B cell (primary cell): ENCODE measurements at regions of chr2 and their contacts with region 1.

Region 1: GRCh38 chr2:36966370-36967235 is at the start of gene STRN:
- DNase-seq: peak; percentile 99
- ATAC-seq: peak; percentile 91
- H3K4me3 ChIP-seq: peak within 1 kb of the TSS; percentile 66 to 91 (median 79)
- H3K4me3 Mint-ChIP-seq: peak within 1 kb of the TSS; percentile 99
- H3K27ac ChIP-seq: peak within 1 kb of the TSS; percentile 72 to 89
- H3K27ac Mint-ChIP-seq: peak within 1 kb of the TSS; percentile 94
- H3K4me1 ChIP-seq: peaks cover 21 to 23% of the 10 kb centered on the region in 2 donors
- H3K4me1 Mint-ChIP-seq: peaks cover 33% of the 10 kb centered on the region
- H3K27me3 ChIP-seq: no peaks in the 10 kb centered on the region
- H3K27me3 Mint-ChIP-seq: no peaks in the 10 kb centered on the region
- CTCF ChIP-seq: no peak
- total RNA-seq, gene STRN: 38.6 and 42.8 TPM in 2 replicates

Region 2: GRCh38 chr2:36981911-36982310 is 15.3 kb after region 1 on chr2:
- CTCF ChIA-PET with region 1: no interaction called
- POLR2A ChIA-PET with region 1: no interaction called
- intact Hi-C with region 1: no loop called
- DNase-seq: no peak
- ATAC-seq: no peak
- H3K4me3 ChIP-seq: no peak overlapping the region
- H3K4me3 Mint-ChIP-seq: no peak overlapping the region
- H3K27ac ChIP-seq: no peak overlapping the region
- H3K27ac Mint-ChIP-seq: no peak overlapping the region
- H3K4me1 ChIP-seq: no peaks in the 10 kb centered on the region
- H3K4me1 Mint-ChIP-seq: no peaks in the 10 kb centered on the region
- H3K27me3 ChIP-seq: no peaks in the 10 kb centered on the region
- H3K27me3 Mint-ChIP-seq: no peaks in the 10 kb centered on the region
- CTCF ChIP-seq: no peak

Region 3: DNA sequence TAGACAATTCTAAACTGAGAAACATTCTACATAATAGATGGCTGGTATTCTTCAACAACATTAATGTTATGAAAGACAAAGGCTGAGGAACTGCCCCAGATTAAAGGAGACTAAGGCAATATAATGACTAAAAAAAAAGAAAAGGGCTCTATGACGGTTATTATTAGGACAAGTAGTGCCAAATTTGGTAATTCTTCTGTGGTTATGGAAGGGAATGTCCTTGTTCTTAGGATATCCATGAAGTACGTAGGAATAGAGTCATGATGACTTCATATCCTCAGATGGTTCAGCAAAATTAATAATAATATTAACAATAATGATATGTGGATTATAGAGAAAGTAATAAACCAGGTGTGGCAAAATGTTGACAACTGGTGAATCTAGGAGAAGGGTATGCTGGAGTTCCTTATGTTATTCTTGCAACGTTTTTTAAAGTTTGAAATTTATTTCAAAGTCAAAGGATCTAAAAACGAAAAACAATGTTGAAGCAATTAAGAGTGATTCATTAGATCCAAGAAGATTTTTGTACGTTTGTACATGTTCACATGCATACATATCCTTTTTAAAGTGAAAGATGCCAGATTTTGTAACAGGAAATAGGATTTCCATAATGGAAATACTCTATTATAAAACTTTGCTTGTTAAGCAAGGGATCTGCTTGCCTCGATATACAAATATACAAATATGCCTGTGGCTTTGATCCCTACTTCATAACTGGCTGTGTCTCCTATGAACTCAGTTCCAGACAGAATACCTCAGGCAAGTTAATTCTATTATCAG is 27.4 kb after region 1 on chr2:
- CTCF ChIA-PET with region 1: no interaction called
- POLR2A ChIA-PET with region 1: interaction called, 11 read pairs
- intact Hi-C with region 1: no loop called
- DNase-seq: no peak
- ATAC-seq: no peak
- H3K4me3 ChIP-seq: no peak overlapping the region
- H3K4me3 Mint-ChIP-seq: no peak overlapping the region
- H3K27ac ChIP-seq: no peak overlapping the region
- H3K27ac Mint-ChIP-seq: no peak overlapping the region
- H3K4me1 ChIP-seq: no peaks in the 10 kb centered on the region
- H3K4me1 Mint-ChIP-seq: no peaks in the 10 kb centered on the region
- H3K27me3 ChIP-seq: no peaks in the 10 kb centered on the region
- H3K27me3 Mint-ChIP-seq: no peaks in the 10 kb centered on the region
- CTCF ChIP-seq: no peak

Region 4: DNA sequence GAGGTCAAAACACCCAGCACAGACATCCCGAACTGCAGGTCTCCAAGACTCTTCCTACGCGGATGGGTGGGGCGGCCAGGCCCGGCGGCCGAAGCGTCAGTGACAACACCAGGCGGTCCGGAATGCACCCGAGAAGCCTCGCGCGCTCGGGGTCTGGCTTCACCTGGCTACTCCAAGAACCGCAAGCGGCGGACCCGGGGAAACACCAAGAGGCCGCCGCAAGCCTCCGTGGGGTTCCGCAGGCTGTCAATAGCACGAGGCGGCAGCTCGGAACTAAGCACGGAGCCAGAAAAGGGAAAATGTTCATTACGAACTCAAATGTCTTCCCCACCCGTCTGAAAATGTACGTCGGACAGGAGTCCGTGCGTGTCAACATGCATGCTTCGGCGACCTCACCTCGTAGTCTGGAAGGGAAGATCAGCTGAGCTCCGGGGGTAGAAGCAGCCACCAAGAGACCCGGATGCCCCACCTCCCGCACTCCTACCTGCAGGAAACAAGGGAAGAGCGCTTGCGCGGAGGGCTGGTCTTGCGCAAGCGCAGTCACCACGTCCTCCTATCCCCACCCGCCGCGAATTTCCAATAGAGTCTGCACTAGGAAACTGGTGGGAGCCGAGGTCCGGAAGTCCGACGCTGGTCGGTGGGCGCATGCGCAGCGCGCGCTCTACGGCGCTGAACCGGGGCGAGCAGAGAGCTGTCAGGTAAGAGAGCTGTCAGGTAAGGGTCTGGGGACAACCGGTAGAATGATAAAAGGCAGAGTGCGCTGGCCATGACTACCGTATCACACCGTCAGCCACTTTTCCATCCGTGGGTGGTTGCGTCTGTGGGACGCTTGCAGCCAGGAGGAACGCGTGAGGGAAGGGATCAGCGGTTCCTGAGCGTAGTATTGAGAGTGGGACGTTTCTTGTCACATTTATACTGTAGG is 117.5 kb after region 1 on chr2 and contains the starts of genes GPATCH11 and HEATR5B:
- CTCF ChIA-PET with region 1: no interaction called
- POLR2A ChIA-PET with region 1: no interaction called
- intact Hi-C with region 1: loop called (anchors 1 kb)
- DNase-seq: peak; percentile 94
- ATAC-seq: peak; percentile 81
- H3K4me3 ChIP-seq: peak within 1 kb of the TSS; percentile 75 to 93 (median 89)
- H3K4me3 Mint-ChIP-seq: peak within 1 kb of the TSS; percentile 76
- H3K27ac ChIP-seq: peak within 1 kb of the TSS; percentile 69 to 91
- H3K27ac Mint-ChIP-seq: peak within 1 kb of the TSS; percentile 84
- H3K4me1 ChIP-seq: peaks cover 67 to 73% of the 10 kb centered on the region in 2 donors
- H3K4me1 Mint-ChIP-seq: peaks cover 61% of the 10 kb centered on the region
- H3K27me3 ChIP-seq: no peaks in the 10 kb centered on the region
- H3K27me3 Mint-ChIP-seq: no peaks in the 10 kb centered on the region
- CTCF ChIP-seq: no peak
- total RNA-seq, gene GPATCH11: 18.2 and 20.2 TPM in 2 replicates
- total RNA-seq, gene HEATR5B: 44.3 and 50.0 TPM in 2 replicates

Region 5: GRCh38 chr2:37196320-37197195 is 230.0 kb after region 1 on chr2 and contains the start of gene CEBPZOS:
- CTCF ChIA-PET with region 1: no interaction called
- POLR2A ChIA-PET with region 1: no interaction called
- intact Hi-C with region 1: loop called (anchors 1 kb)
- DNase-seq: peak; percentile 94
- ATAC-seq: peak; percentile 89
- H3K4me3 ChIP-seq: peak within 1 kb of the TSS; percentile 70 to 87 (median 80)
- H3K4me3 Mint-ChIP-seq: peak within 1 kb of the TSS; percentile 98
- H3K27ac ChIP-seq: peak within 1 kb of the TSS; percentile 78 to 81
- H3K27ac Mint-ChIP-seq: peak within 1 kb of the TSS; percentile 99
- H3K4me1 ChIP-seq: peaks cover 16 to 24% of the 10 kb centered on the region in 2 donors
- H3K4me1 Mint-ChIP-seq: peaks cover 22% of the 10 kb centered on the region
- H3K27me3 ChIP-seq: no peaks in the 10 kb centered on the region
- H3K27me3 Mint-ChIP-seq: no peaks in the 10 kb centered on the region
- CTCF ChIP-seq: no peak
- total RNA-seq, gene CEBPZOS: 36.7 and 38.0 TPM in 2 replicates

Region 6: DNA sequence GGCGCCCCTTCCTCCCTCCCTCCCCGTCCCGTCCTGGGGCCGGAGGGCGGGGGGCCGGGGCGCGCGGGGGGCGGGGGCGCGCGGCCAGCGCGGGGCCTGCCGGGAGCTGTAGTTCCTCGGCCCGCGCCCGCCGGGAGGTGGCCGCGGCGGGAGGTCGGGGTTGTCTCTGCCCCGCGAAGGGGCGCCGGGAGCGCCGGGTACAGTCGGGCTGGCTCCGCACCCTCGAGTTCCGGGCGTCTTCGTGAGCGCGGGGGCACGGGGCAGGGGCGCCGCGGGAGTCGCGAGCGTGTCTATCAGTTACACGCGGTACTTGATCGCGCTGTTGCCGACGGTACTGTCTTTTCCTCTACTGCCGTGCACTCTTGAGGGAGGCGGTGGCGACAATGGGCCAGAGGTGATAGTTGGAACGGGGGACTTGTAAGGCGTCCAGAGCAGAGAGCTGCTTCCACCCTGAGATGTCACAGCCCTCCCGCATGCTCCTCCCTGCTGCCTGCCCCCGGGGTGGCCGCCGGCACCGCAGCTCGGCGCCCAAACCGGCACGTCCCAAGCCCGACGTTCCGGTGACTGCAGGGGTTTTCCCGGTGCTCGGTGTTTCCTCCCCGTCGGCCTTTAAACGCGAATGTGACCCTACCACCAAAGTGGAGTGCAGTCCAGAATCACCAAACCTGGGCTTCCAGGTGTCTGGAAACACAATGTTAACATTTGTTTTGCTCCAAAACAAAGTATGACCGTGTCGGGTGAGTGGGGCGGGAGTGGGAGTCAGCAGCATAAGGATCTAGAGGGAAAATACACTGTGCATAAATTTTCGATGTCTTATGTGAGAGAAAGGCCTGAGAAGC is 358.4 kb after region 1 on chr2 and contains the start of gene PRKD3:
- CTCF ChIA-PET with region 1: no interaction called
- POLR2A ChIA-PET with region 1: no interaction called
- intact Hi-C with region 1: loop called (anchors 2 kb)
- DNase-seq: peak; percentile 89
- ATAC-seq: peak; percentile 81
- H3K4me3 ChIP-seq: peak within 1 kb of the TSS; percentile 82 to 91 (median 86)
- H3K4me3 Mint-ChIP-seq: peak within 1 kb of the TSS; percentile 100
- H3K27ac ChIP-seq: peak within 1 kb of the TSS; percentile 80 to 88
- H3K27ac Mint-ChIP-seq: peak within 1 kb of the TSS; percentile 97
- H3K4me1 ChIP-seq: peaks cover 29 to 37% of the 10 kb centered on the region in 2 donors
- H3K4me1 Mint-ChIP-seq: peaks cover 38% of the 10 kb centered on the region
- H3K27me3 ChIP-seq: no peaks in the 10 kb centered on the region
- H3K27me3 Mint-ChIP-seq: peaks cover 3% of the 10 kb centered on the region
- CTCF ChIP-seq: no peak
- total RNA-seq, gene PRKD3: 82.2 and 83.4 TPM in 2 replicates

Region 7: DNA sequence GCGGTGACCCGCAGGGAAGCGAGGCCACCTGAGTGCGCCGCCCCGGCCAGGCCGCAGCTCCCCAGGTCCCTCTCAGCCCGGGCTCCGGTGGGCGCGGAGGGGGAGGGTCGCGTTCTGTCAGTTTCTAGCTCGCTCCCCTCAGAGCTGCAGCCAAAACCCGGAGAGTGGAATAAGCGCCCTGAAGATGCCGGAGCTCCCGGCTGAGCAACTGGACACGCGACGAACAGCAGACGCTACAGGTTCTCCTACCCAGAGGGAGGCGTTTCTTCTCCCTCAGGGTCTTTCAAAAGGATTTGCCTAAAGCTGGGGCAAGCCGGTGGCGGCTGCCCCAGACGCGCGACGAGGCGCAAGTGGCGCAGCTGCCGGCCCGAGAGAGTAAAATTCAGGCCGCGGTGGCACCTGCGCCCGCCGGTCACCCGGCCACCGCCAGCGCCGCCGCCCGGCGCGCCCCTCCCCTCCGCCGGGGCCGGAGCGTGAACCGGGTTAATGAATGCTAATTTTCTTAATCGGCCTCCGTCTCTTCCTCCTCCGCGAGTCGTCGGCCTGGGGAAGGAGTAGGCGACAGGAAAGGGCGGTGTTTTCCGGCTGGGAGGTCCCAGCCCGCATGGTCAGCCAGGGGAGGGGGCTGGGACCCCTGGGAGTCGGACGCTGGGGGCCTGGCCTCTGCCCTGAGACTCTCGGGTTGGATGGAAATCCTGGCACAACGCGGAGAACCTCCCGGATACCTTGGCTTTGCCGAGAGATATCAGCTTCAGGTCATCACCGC is 705.7 kb after region 1 on chr2:
- CTCF ChIA-PET with region 1: no interaction called
- POLR2A ChIA-PET with region 1: no interaction called
- intact Hi-C with region 1: loop called (anchors 5 kb)
- DNase-seq: peak; percentile 86
- ATAC-seq: peak; percentile 48
- H3K4me3 ChIP-seq: peak overlapping the region; percentile 44 to 92 (median 84)
- H3K4me3 Mint-ChIP-seq: peak overlapping the region; percentile 98
- H3K27ac ChIP-seq: peak overlapping the region; percentile 81 to 83
- H3K27ac Mint-ChIP-seq: peak overlapping the region; percentile 95
- H3K4me1 ChIP-seq: peaks cover 31 to 38% of the 10 kb centered on the region in 2 donors
- H3K4me1 Mint-ChIP-seq: peaks cover 52% of the 10 kb centered on the region
- H3K27me3 ChIP-seq: no peaks in the 10 kb centered on the region
- H3K27me3 Mint-ChIP-seq: no peaks in the 10 kb centered on the region
- CTCF ChIP-seq: no peak

Region 8: DNA sequence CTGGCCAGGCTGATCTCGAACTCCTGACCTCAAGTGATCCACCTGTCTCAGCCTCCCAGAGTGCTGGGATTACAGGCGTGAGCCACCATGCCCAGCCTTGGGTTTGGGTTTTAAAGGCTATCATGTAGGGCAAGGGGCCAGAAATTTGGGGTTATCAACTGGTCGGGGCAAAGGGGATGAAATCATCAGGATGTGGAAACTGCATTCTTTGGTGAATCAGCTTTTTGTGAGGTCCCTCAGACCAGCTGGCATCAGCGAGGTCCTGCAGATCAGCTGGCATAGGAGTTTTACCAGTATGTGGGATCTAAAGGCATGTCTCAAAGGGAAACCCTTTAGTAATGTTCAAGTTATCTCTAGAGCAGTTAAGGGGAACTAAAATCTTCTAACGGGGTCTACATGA is 1805.0 kb after region 1 on chr2:
- CTCF ChIA-PET with region 1: no interaction called
- POLR2A ChIA-PET with region 1: no interaction called
- intact Hi-C with region 1: loop called (anchors 10 kb)
- DNase-seq: no peak
- ATAC-seq: no peak
- H3K4me3 ChIP-seq: no peak overlapping the region
- H3K4me3 Mint-ChIP-seq: no peak overlapping the region
- H3K27ac ChIP-seq: no peak overlapping the region
- H3K27ac Mint-ChIP-seq: no peak overlapping the region
- H3K4me1 ChIP-seq: no peaks in the 10 kb centered on the region
- H3K4me1 Mint-ChIP-seq: no peaks in the 10 kb centered on the region
- H3K27me3 ChIP-seq: peaks cover 0 to 3% (median 0%) of the 10 kb centered on the region in 4 experiments
- H3K27me3 Mint-ChIP-seq: peaks cover 16% of the 10 kb centered on the region
- CTCF ChIP-seq: no peak